ENCODE measurements at regions of chr12 and their contacts with region 1.

Region 1: GRCh38 chr12:54299515-54300261 is 1.1 kb downstream of the NFE2 start:
- DNase-seq: no peak
- ATAC-seq: no peak

Region 2: GRCh38 chr12:54324617-54325441 is 25.1 kb after region 1 on chr12 and contains the start of gene COPZ1:
- intact Hi-C with region 1: loop called (anchors 1 kb)
- DNase-seq: peak; percentile 96
- ATAC-seq: peak; percentile 98
- total RNA-seq, gene COPZ1: 130 TPM

Region 3: GRCh38 chr12:54337280-54337842 is 37.7 kb after region 1 on chr12:
- intact Hi-C with region 1: no loop called
- DNase-seq: no peak
- ATAC-seq: peak; percentile 62

Measured in Right ventricle myocardium inferior (tissue), 1 donor.